Panc1 (cell line): ENCODE measurements at regions of chr11 and their contacts with region 1.

Region 1: GRCh38 chr11:66787912-66788758 is 55.1 kb upstream of the RCE1 start:
- DNase-seq: no peak
- ATAC-seq: no peak
- H3K4me3 ChIP-seq: no peak overlapping the region
- H3K27ac ChIP-seq: peak overlapping the region; percentile 32; the same call in 1 of the 2 replicates
- H3K4me1 ChIP-seq: peaks cover 18% of the 10 kb centered on the region
- H3K27me3 ChIP-seq: no peaks in the 10 kb centered on the region
- CTCF ChIP-seq: no peak

Region 2: DNA sequence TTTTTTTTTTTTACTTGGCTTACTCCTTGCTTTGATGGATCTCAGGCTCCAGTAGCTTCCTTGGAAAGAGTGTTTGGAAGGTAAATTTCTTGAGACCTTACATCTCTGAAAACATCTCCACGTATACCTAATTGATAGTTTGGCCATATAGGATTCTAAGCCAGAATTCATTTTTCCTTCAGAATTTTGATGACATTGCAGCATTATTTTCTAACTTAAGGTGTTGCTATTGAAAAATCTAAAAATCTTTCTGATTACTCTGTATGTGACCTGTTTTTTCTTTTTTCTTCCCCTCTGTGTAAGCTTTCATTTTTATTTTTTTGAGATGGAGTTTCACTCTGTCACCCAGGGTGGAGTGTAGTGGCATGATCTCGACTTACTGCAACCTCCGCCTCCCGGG is 36.0 kb before region 1 on chr11:
- CTCF ChIA-PET with region 1: no interaction called
- POLR2A ChIA-PET with region 1: no interaction called
- in situ Hi-C with region 1: no loop called
- intact Hi-C with region 1: no loop called
- DNase-seq: no peak
- ATAC-seq: no peak
- H3K4me3 ChIP-seq: no peak overlapping the region
- H3K27ac ChIP-seq: no peak overlapping the region
- H3K4me1 ChIP-seq: no peaks in the 10 kb centered on the region; the same call in 1 of the 2 replicates
- H3K27me3 ChIP-seq: no peaks in the 10 kb centered on the region
- CTCF ChIP-seq: no peak

Region 3: GRCh38 chr11:66823700-66824099 is 35.6 kb after region 1 on chr11:
- CTCF ChIA-PET with region 1: interaction called, 10 read pairs
- POLR2A ChIA-PET with region 1: no interaction called
- in situ Hi-C with region 1: no loop called
- intact Hi-C with region 1: no loop called
- DNase-seq: no peak
- ATAC-seq: no peak
- H3K4me3 ChIP-seq: no peak overlapping the region
- H3K27ac ChIP-seq: no peak overlapping the region
- H3K4me1 ChIP-seq: no peaks in the 10 kb centered on the region
- H3K27me3 ChIP-seq: no peaks in the 10 kb centered on the region
- CTCF ChIP-seq: no peak

Region 4: DNA sequence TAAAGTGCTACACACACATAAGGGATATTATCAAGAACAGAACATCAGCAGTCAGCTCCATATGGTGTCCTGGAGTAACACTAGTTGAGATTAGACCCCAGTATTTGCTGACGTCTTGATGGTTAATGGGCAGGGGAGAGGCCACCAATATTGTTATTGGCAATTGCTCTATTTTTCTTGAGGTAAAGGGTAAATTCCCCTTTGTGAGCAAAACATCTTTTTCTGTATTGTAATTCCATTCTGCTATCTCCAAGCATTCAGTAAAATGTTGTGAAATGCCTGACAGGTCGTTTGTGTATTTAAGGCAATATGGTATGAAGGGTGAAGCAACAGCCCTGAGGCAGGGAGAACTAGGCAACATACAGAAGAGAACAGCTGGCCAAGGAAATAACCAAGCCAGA is 148.2 kb after region 1 on chr11:
- CTCF ChIA-PET with region 1: no interaction called
- POLR2A ChIA-PET with region 1: no interaction called
- in situ Hi-C with region 1: no loop called
- intact Hi-C with region 1: no loop called
- DNase-seq: no peak
- ATAC-seq: no peak
- H3K4me3 ChIP-seq: no peak overlapping the region
- H3K27ac ChIP-seq: no peak overlapping the region
- H3K4me1 ChIP-seq: no peaks in the 10 kb centered on the region
- H3K27me3 ChIP-seq: no peaks in the 10 kb centered on the region
- CTCF ChIP-seq: no peak

Region 5: DNA sequence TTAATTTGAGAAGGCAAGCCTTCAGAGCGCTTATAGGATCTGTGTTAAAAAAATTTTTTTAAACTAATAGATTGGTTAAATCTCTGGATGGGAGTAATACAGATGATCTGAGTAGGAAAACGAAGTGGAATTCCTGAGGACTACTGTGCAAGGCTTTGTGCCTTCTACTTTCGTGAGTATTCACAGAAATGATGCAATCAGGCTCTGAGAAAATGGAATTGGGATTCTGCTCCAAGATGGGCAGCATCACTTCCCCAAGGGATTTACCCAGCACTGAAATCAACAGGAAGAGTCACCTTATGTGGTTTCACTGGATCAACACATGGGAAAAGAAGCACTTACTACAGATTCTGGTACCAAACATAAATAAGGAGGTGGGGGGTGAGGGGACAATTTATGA is 1412.5 kb after region 1 on chr11:
- CTCF ChIA-PET with region 1: no interaction called
- POLR2A ChIA-PET with region 1: no interaction called
- in situ Hi-C with region 1: no loop called
- intact Hi-C with region 1: no loop called
- DNase-seq: no peak
- ATAC-seq: no peak; the same call in 1 of the 2 replicates
- H3K4me3 ChIP-seq: no peak overlapping the region
- H3K27ac ChIP-seq: peak overlapping the region; percentile 54; the same call in 1 of the 2 replicates
- H3K4me1 ChIP-seq: peaks cover 21% of the 10 kb centered on the region
- H3K27me3 ChIP-seq: no peaks in the 10 kb centered on the region
- CTCF ChIP-seq: no peak